ENCODE measurements at regions of chr1 and their contacts with region 1.

Region 1: GRCh38 chr1:113991467-113991997 is 12.3 kb downstream of the OLFML3 start:
- DNase-seq: no peak
- H3K4me3 Mint-ChIP-seq: no peak overlapping the region
- H3K27ac Mint-ChIP-seq: no peak overlapping the region
- H3K4me1 Mint-ChIP-seq: no peaks in the 10 kb centered on the region
- H3K27me3 Mint-ChIP-seq: no peaks in the 10 kb centered on the region
- CTCF ChIP-seq: no peak

Region 2: GRCh38 chr1:114290341-114290740 is 298.8 kb after region 1 on chr1:
- CTCF ChIA-PET with region 1: no interaction called
- POLR2A ChIA-PET with region 1: no interaction called
- intact Hi-C with region 1: loop called (anchors 1 kb)
- DNase-seq: no peak
- H3K4me3 Mint-ChIP-seq: no peak overlapping the region
- H3K27ac Mint-ChIP-seq: no peak overlapping the region
- H3K4me1 Mint-ChIP-seq: no peaks in the 10 kb centered on the region
- H3K27me3 Mint-ChIP-seq: no peaks in the 10 kb centered on the region
- CTCF ChIP-seq: no peak

Measured in MCF 10A (cell line).